SK-MEL-5 (cell line): ENCODE measurements at regions of chr3 and their contacts with region 1.

Region 1: DNA sequence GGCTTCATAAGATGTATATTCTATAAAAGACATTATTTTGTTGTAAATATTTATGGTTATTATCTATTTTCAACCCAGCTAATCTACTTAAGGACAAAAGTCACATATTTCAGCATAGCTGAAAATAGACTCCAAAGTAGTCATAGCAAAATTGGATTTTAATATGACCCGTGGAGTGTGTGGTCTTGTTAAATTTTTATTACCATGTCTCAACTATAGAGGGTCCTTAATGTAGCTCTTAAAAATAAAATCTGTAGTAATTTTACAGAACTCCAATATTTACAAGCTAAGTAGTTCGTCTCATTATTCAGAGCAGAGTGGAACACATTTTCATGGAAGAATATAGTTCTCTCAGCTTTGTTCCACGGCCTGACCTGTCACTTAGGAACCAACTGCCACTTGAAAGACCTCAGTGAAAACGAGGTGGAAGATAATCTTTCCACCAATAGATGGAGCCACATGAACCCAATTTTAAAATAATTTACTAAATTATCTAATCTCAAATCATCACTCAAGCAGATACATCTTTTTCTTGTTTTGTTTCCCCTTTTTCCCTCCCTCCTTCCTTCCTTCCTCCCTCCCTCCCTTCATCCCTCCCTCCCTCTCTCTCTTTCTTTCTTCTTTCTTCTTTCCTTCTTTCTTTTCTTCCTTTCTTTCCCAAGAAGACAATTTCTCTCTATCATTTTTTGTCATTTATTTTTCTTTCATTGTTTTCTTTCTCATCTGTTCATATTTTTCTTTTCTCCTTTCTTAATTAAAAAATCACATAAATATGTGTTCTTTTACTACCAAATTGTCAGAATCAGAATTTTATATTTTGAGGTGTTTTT is 97.2 kb downstream of the CLDN1 start:
- DNase-seq: peak; percentile 66

Region 2: DNA sequence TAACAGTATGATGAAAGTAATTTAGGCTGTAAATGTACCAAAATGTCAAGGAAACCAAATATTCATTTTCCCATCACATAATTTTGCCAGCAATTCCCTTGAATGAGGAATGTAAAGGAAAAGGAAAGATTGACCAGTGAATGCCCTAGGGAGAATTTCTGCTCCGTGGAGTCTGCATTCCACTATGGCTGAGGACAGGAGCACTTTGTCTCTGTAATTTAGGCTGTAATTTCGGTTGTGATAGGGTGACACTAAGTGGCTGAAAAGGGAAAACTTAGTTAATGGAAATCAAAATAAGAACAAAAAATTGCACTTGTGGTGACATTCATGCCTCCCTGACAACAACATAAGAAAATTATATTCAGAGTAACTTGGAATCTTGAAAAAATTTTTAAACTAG is 233.0 kb after region 1 on chr3:
- in situ Hi-C with region 1: loop called (anchors 25 kb)
- DNase-seq: peak; percentile 88